Activated CD4-positive, alpha-beta T cell treated with anti-CD3 and anti-CD28 coated beads for 36 hours (primary cell): ENCODE measurements at regions of chr7 and their contacts with region 1.

Region 1: GRCh38 chr7:72217151-72217550 is 195.0 kb downstream of the CALN1 start:
- DNase-seq: no peak
- ATAC-seq: no peak
- H3K4me3 Mint-ChIP-seq: no peak overlapping the region
- H3K27ac Mint-ChIP-seq: no peak overlapping the region
- H3K4me1 Mint-ChIP-seq: no peaks in the 10 kb centered on the region
- H3K27me3 Mint-ChIP-seq: no peaks in the 10 kb centered on the region

Region 2: DNA sequence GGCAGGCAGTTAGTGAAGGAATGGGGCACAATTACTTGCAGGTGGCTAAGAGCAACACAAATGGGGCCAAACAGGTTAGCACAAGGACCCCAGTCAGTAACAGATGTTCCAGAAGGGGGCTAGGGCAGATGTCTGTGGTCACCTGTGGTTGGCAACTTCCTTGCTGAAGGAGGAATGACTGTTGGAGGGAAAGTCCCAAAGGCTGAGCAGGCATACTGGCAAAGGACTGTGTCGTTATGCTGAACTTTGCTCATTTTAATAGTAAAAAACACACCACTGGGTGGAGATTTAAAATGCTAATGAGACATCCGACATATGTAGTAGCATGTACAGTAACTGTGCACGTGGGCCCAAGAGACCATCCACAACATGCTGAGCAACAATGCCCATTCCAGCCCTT is 316.6 kb before region 1 on chr7:
- CTCF ChIA-PET with region 1: no interaction called
- POLR2A ChIA-PET with region 1: no interaction called
- intact Hi-C with region 1: loop called in 1 of 2 experiments (anchors 10 kb)
- DNase-seq: no peak
- ATAC-seq: no peak
- H3K4me3 Mint-ChIP-seq: no peak overlapping the region
- H3K27ac Mint-ChIP-seq: no peak overlapping the region
- H3K4me1 Mint-ChIP-seq: no peaks in the 10 kb centered on the region
- H3K27me3 Mint-ChIP-seq: no peaks in the 10 kb centered on the region